Thyroid gland (tissue), 4 donors: ENCODE measurements at regions of chr6 and their contacts with region 1.

Region 1: GRCh38 chr6:26065952-26066380 is 21.3 kb upstream of the HFE start:
- DNase-seq: peak; percentile 54
- H3K4me3 ChIP-seq: no peak overlapping the region
- H3K27ac ChIP-seq: no peak overlapping the region
- H3K4me1 ChIP-seq: peaks cover 0 to 3% of the 10 kb centered on the region in 2 donors
- H3K27me3 ChIP-seq: no peaks in the 10 kb centered on the region
- CTCF ChIP-seq: peak; percentile 50 to 86 (median 84)
- POLR2A ChIP-seq: no peak

Region 2: GRCh38 chr6:26097268-26097875 is 31.4 kb after region 1 on chr6:
- intact Hi-C with region 1: loop called (anchors 2 kb)
- DNase-seq: peak; percentile 64 to 68
- H3K4me3 ChIP-seq: no peak overlapping the region
- H3K27ac ChIP-seq: no peak overlapping the region
- H3K4me1 ChIP-seq: no peaks in the 10 kb centered on the region
- H3K27me3 ChIP-seq: no peaks in the 10 kb centered on the region
- CTCF ChIP-seq: peak; percentile 66 to 92 (median 72)
- POLR2A ChIP-seq: no peak